ENCODE measurements at regions of chr13 and their contacts with region 1.

Region 1: GRCh38 chr13:71320452-71320851 is 546.6 kb downstream of the DACH1 start:
- DNase-seq: peak; percentile 3
- H3K4me3 Mint-ChIP-seq: no peak overlapping the region
- H3K27ac Mint-ChIP-seq: no peak overlapping the region
- H3K4me1 Mint-ChIP-seq: no peaks in the 10 kb centered on the region
- H3K27me3 Mint-ChIP-seq: no peaks in the 10 kb centered on the region
- CTCF ChIP-seq: no peak

Region 2: DNA sequence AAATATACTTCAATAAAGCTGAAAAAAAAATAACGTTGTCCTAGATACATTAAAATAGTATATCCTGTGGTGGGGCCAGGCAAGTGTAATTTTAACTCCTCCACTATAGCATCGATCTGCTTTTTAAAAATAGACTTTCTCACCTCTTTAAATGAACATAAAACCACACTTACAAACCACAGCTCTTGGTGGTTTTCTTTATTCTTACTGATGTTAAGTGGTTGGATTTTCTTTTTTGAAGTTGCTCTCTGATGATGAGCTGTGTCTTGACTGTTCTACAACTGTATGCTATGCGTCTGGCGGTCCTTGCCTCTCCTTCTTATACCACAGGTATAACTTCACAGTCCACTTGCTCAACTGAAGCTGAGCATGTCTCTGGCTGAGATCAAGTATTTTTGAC is 490.7 kb before region 1 on chr13:
- CTCF ChIA-PET with region 1: no interaction called
- intact Hi-C with region 1: no loop called
- DNase-seq: no peak
- H3K4me3 Mint-ChIP-seq: no peak overlapping the region
- H3K27ac Mint-ChIP-seq: no peak overlapping the region
- H3K4me1 Mint-ChIP-seq: no peaks in the 10 kb centered on the region
- H3K27me3 Mint-ChIP-seq: no peaks in the 10 kb centered on the region
- CTCF ChIP-seq: no peak

Region 3: GRCh38 chr13:71021825-71022422 is 298.5 kb before region 1 on chr13:
- CTCF ChIA-PET with region 1: no interaction called
- intact Hi-C with region 1: no loop called
- DNase-seq: no peak
- H3K4me3 Mint-ChIP-seq: no peak overlapping the region
- H3K27ac Mint-ChIP-seq: no peak overlapping the region
- H3K4me1 Mint-ChIP-seq: no peaks in the 10 kb centered on the region
- H3K27me3 Mint-ChIP-seq: no peaks in the 10 kb centered on the region
- CTCF ChIP-seq: no peak

Region 4: GRCh38 chr13:71417205-71417604 is 96.8 kb after region 1 on chr13:
- CTCF ChIA-PET with region 1: no interaction called
- intact Hi-C with region 1: no loop called
- DNase-seq: no peak
- H3K4me3 Mint-ChIP-seq: no peak overlapping the region
- H3K27ac Mint-ChIP-seq: no peak overlapping the region
- H3K4me1 Mint-ChIP-seq: peaks cover 5% of the 10 kb centered on the region
- H3K27me3 Mint-ChIP-seq: no peaks in the 10 kb centered on the region
- CTCF ChIP-seq: no peak

Region 5: DNA sequence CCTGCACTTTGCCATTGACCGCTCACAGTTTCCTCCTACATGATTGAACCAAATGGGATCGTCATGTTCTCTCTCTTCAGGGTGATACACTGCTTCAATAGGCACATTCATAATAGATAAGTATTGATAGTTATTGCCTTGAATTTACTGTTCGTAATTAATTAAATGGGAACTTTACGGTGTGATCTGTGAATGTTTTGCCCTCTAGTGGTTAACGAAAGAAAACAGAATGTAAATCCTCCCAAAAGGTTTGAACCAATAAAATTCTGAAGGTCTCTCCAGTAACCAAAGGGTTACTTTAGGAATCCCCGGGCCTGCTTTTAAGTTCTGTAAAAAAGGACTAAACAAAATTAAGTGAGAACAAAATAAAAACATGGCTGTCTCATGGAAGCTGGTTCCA is 157.3 kb after region 1 on chr13:
- CTCF ChIA-PET with region 1: no interaction called
- intact Hi-C with region 1: loop called (anchors 10 kb)
- DNase-seq: no peak
- H3K4me3 Mint-ChIP-seq: no peak overlapping the region
- H3K27ac Mint-ChIP-seq: no peak overlapping the region
- H3K4me1 Mint-ChIP-seq: no peaks in the 10 kb centered on the region
- H3K27me3 Mint-ChIP-seq: no peaks in the 10 kb centered on the region
- CTCF ChIP-seq: no peak

Region 6: GRCh38 chr13:71879129-71879535 is 558.7 kb after region 1 on chr13:
- CTCF ChIA-PET with region 1: interaction called, 5 read pairs
- intact Hi-C with region 1: loop called (anchors 5 kb)
- DNase-seq: no peak
- H3K4me3 Mint-ChIP-seq: no peak overlapping the region
- H3K27ac Mint-ChIP-seq: no peak overlapping the region
- H3K4me1 Mint-ChIP-seq: peaks cover 10% of the 10 kb centered on the region
- H3K27me3 Mint-ChIP-seq: no peaks in the 10 kb centered on the region
- CTCF ChIP-seq: no peak

Region 7: DNA sequence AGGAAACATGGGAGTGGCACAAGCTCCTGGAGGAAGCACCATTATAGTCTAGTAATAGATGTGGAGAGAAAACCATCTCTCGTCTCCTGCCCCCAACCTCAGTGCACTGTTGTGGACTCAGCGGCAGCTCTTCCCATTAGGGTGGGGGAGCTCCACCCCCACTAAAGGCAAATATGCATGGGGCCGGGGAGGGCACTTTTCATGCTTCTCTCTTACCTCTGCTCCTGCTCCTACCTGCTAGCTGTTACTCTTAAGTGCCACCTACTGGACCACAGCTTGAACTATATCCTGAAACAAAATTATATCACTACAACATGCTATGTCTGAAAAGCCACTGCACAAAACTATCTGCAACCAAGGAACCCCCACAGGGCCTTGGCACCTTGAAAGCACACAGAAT is 659.2 kb after region 1 on chr13:
- CTCF ChIA-PET with region 1: no interaction called
- intact Hi-C with region 1: loop called (anchors 5 kb)
- DNase-seq: no peak
- H3K4me3 Mint-ChIP-seq: no peak overlapping the region
- H3K27ac Mint-ChIP-seq: no peak overlapping the region
- H3K4me1 Mint-ChIP-seq: no peaks in the 10 kb centered on the region
- H3K27me3 Mint-ChIP-seq: no peaks in the 10 kb centered on the region
- CTCF ChIP-seq: no peak

Measured in Calu3 (cell line).